PC-3 (cell line): ENCODE measurements at regions of chr11 and their contacts with region 1.

Region 1: GRCh38 chr11:1572197-1573076 is at the start of gene DUSP8:
- DNase-seq: peak; percentile 70
- ATAC-seq: peak; percentile 23
- H3K4me3 ChIP-seq: peak within 1 kb of the TSS; percentile 67
- H3K27ac ChIP-seq: no peak within 1 kb of the TSS
- H3K4me1 ChIP-seq: peaks cover 8% of the 10 kb centered on the region
- H3K27me3 ChIP-seq: peaks cover 16% of the 10 kb centered on the region
- CTCF ChIP-seq: no peak
- total RNA-seq, gene DUSP8: 2.4 and 2.6 TPM in 2 replicates

Region 2: GRCh38 chr11:1546536-1547400 is 25.7 kb before region 1 on chr11:
- CTCF ChIA-PET with region 1: interaction called, 58 read pairs
- POLR2A ChIA-PET with region 1: no interaction called
- intact Hi-C with region 1: loop called (anchors 1 kb)
- DNase-seq: peak; percentile 60
- ATAC-seq: peak; percentile 69
- H3K4me3 ChIP-seq: peak overlapping the region; percentile 63
- H3K27ac ChIP-seq: no peak overlapping the region
- H3K4me1 ChIP-seq: peaks cover 9% of the 10 kb centered on the region
- H3K27me3 ChIP-seq: peaks cover 6% of the 10 kb centered on the region
- CTCF ChIP-seq: peak; percentile 70

Region 3: GRCh38 chr11:1553808-1554594 is 18.4 kb before region 1 on chr11:
- CTCF ChIA-PET with region 1: interaction called, 10 read pairs
- POLR2A ChIA-PET with region 1: interaction called, 4 read pairs
- intact Hi-C with region 1: loop called (anchors 2 kb)
- DNase-seq: peak; percentile 73
- ATAC-seq: peak; percentile 56
- H3K4me3 ChIP-seq: no peak overlapping the region
- H3K27ac ChIP-seq: no peak overlapping the region
- H3K4me1 ChIP-seq: peaks cover 18% of the 10 kb centered on the region
- H3K27me3 ChIP-seq: no peaks in the 10 kb centered on the region
- CTCF ChIP-seq: peak; percentile 47

Region 4: DNA sequence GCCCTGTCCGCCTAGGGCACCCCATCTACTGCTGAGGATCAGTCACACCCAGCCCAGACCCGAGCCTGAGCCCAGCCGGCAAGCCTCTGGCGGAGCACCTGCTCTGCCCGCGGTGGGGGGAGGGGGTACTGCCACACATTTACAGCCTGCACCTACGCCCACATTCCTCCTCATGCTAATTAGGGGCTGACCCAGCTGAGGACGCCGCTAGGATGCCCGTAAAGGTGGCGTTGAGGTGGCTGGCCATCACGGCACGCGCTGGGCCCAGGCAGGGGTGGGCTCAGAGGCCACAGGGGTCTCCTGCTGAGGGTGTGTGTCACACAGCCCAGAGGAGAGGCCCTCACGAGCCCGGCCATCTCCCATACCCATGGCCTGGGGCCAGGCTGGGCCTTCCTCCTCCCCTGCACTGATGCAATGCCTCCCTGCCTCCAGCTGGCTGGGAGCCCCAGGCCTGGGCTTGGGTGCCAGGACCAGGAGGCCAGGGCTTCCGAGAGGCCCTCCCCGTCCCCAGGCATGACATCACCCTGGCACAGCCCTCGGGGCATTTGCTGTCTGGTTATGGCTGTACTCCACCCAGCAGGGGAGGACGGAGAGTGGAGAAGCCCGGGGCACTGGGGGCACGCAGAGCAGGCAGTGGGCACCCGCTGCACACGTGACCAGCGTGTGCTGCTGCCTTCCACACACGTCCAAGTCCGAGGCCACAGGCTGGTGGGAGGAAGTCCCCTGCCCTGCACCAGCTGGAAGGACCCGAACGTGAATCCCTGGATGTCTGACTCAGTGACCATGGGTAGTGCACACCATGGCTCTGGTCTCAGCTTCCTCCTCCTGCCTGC is 13.1 kb before region 1 on chr11:
- CTCF ChIA-PET with region 1: interaction called, 10 read pairs
- POLR2A ChIA-PET with region 1: interaction called, 25 read pairs
- intact Hi-C with region 1: loop called (anchors 2 kb)
- DNase-seq: peak; percentile 92
- ATAC-seq: peak; percentile 66
- H3K4me3 ChIP-seq: peak overlapping the region; percentile 63
- H3K27ac ChIP-seq: peak overlapping the region; percentile 79
- H3K4me1 ChIP-seq: peaks cover 28% of the 10 kb centered on the region
- H3K27me3 ChIP-seq: no peaks in the 10 kb centered on the region
- CTCF ChIP-seq: no peak

Region 5: DNA sequence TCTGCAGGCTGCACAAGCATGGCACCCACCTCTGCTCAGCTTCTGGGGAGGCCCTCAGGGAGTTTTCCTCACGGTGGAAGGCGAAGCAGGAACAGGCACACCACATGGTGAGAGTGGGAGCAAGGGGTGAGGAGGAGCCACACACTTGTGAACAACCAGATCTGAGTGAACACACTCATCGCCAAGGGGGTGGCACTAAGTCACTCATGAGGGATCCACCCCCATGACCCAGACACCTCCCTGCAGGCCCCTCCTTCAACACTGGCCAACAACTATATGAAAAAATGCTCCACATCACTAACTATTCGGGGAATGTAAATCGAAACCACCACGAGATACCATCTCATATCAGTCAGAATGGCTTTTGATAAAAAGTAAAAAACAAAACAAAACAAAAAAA is 26.4 kb after region 1 on chr11:
- CTCF ChIA-PET with region 1: interaction called, 11 read pairs
- POLR2A ChIA-PET with region 1: no interaction called
- intact Hi-C with region 1: no loop called
- DNase-seq: no peak
- ATAC-seq: no peak
- H3K4me3 ChIP-seq: no peak overlapping the region
- H3K27ac ChIP-seq: no peak overlapping the region
- H3K4me1 ChIP-seq: no peaks in the 10 kb centered on the region
- H3K27me3 ChIP-seq: peaks cover 30% of the 10 kb centered on the region
- CTCF ChIP-seq: no peak